Activated T-helper 1 cell treated with anti-CD3 and anti-CD28 coated beads, Interleukin-12 subunit alpha, Interleukin-12 subunit beta, Interleukin-2, Interleukin-4 antibody, amounts not matched to agents 30 ng/mL and 10 ng/mL and 1 ng/mL, durations not matched to agents 14 hours and 24 hours and 36 hours (primary cell): ENCODE measurements at regions of chr13 and their contacts with region 1.

Region 1: GRCh38 chr13:113816946-113817859 is 46.7 kb downstream of the GAS6 start:
- DNase-seq: peak; percentile 79
- H3K4me3 Mint-ChIP-seq: peak overlapping the region; percentile 92
- H3K27ac Mint-ChIP-seq: peak overlapping the region; percentile 72
- H3K4me1 Mint-ChIP-seq: peaks cover 22% of the 10 kb centered on the region
- H3K27me3 Mint-ChIP-seq: no peaks in the 10 kb centered on the region

Region 2: GRCh38 chr13:113044391-113045114 is 772.6 kb before region 1 on chr13:
- intact Hi-C with region 1: no loop called
- DNase-seq: no peak
- H3K4me3 Mint-ChIP-seq: no peak overlapping the region
- H3K27ac Mint-ChIP-seq: no peak overlapping the region
- H3K4me1 Mint-ChIP-seq: no peaks in the 10 kb centered on the region
- H3K27me3 Mint-ChIP-seq: no peaks in the 10 kb centered on the region

Region 3: GRCh38 chr13:113904411-113904810 is 87.2 kb after region 1 on chr13:
- intact Hi-C with region 1: loop called (anchors 1 kb)
- DNase-seq: no peak
- H3K4me3 Mint-ChIP-seq: no peak overlapping the region
- H3K27ac Mint-ChIP-seq: no peak overlapping the region
- H3K4me1 Mint-ChIP-seq: no peaks in the 10 kb centered on the region
- H3K27me3 Mint-ChIP-seq: peaks cover 27% of the 10 kb centered on the region

Region 4: GRCh38 chr13:114110091-114110829 is 293.1 kb after region 1 on chr13:
- intact Hi-C with region 1: loop called (anchors 1 kb)
- DNase-seq: peak; percentile 70
- H3K4me3 Mint-ChIP-seq: peak overlapping the region; percentile 83
- H3K27ac Mint-ChIP-seq: peak overlapping the region; percentile 95
- H3K4me1 Mint-ChIP-seq: peaks cover 62% of the 10 kb centered on the region
- H3K27me3 Mint-ChIP-seq: no peaks in the 10 kb centered on the region

Region 5: GRCh38 chr13:114148521-114148855 is 331.3 kb after region 1 on chr13:
- intact Hi-C with region 1: loop called (anchors 5 kb)
- DNase-seq: peak; percentile 90
- H3K4me3 Mint-ChIP-seq: peak overlapping the region; percentile 69
- H3K27ac Mint-ChIP-seq: peak overlapping the region; percentile 85
- H3K4me1 Mint-ChIP-seq: peaks cover 84% of the 10 kb centered on the region
- H3K27me3 Mint-ChIP-seq: peaks cover 2% of the 10 kb centered on the region

Region 6: DNA sequence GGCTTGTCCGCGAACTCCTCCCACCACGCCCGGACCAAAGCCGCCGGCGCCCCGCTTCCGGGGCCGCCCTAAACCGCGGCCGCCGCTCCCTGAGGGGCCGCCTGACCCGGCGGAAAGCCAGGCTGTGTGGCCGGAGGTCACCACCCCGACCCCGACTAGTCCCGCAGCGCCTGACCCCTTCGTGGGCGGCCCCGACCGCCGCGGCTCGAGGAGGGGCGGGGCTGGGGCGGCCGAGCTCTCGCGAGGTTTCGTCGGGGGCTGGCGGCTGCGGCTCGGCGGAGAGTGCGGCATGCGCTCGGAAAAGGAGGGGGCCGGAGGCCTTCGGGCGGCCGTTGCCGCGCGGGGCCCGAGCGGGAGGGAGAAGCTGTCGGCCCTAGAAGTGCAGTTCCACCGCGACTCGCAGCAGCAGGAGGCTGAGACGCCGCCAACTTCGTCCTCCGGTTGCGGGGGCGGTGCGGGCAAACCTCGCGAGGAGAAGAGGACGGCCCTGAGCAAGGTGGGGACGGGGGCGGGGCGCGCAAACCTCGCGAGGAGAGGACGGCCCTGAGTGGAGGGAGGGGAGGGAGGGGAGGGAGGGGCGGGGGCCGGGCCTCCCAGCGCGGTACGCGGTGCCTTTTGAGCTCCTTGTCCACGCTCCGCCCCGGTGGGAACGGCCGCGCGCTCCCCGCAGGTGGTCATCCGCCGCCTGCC is 464.3 kb after region 1 on chr13 and contains the start of gene UPF3A:
- intact Hi-C with region 1: loop called (anchors 1 kb)
- DNase-seq: peak; percentile 83
- H3K4me3 Mint-ChIP-seq: peak within 1 kb of the TSS; percentile 90
- H3K27ac Mint-ChIP-seq: peak within 1 kb of the TSS; percentile 98
- H3K4me1 Mint-ChIP-seq: peaks cover 52% of the 10 kb centered on the region
- H3K27me3 Mint-ChIP-seq: no peaks in the 10 kb centered on the region
- total RNA-seq, gene UPF3A: 45.9 and 48.3 TPM in 2 replicates